HEK293 (cell line): ENCODE measurements at regions of chr22 and their contacts with region 1.

Region 1: GRCh38 chr22:33018232-33018864 is 39.8 kb downstream of the SYN3 start:
- H3K4me3 ChIP-seq: no peak overlapping the region
- H3K27ac ChIP-seq: no peak overlapping the region
- H3K4me1 ChIP-seq: peaks cover 6% of the 10 kb centered on the region; the same call in 1 of the 2 replicates
- CTCF ChIP-seq: peak; percentile 46; the same call in 1 of the 2 replicates

Region 2: DNA sequence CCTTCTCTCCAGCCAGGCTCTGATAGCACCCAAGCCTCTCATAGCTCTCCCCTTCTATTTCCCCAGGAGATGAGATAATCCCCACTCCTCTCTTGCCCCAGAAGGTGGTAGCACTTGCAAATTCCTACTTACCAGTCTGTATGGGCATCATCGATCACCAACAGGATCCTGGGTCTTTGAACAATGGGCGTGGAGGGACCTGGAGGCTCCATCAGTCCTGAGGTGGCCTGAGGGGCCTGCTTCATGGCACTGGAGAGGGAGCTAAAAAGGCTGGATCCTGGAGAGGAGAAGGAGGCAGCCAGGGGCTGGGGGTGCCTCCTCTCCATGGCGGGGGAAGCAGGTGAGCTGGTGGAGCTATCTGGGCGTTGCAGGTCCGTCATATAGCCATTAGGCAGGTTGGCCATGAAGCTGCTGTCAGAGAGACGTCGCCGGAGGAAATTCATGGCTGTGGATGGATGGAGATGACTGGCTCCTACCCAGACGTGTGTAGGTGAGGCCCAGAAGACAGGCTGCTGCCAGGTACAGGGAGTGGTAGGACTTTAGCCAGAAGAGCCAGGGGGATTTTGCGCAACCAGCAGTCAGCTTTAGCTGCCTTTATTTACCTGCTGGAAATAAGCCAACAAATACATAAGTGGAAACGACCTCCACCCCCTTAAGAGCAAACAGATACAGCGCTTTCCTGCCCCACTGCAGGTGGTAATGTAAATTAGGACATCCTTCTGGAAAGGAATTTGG is 12.0 kb before region 1 on chr22:
- CTCF ChIA-PET with region 1: interaction called, 48 read pairs
- POLR2A ChIA-PET with region 1: no interaction called
- H3K4me3 ChIP-seq: no peak overlapping the region
- H3K27ac ChIP-seq: no peak overlapping the region
- H3K4me1 ChIP-seq: 0 out of 2 replicates have a peak, but pooled peaks cover 4% of the 10 kb centered on the region
- CTCF ChIP-seq: no peak

Region 3: DNA sequence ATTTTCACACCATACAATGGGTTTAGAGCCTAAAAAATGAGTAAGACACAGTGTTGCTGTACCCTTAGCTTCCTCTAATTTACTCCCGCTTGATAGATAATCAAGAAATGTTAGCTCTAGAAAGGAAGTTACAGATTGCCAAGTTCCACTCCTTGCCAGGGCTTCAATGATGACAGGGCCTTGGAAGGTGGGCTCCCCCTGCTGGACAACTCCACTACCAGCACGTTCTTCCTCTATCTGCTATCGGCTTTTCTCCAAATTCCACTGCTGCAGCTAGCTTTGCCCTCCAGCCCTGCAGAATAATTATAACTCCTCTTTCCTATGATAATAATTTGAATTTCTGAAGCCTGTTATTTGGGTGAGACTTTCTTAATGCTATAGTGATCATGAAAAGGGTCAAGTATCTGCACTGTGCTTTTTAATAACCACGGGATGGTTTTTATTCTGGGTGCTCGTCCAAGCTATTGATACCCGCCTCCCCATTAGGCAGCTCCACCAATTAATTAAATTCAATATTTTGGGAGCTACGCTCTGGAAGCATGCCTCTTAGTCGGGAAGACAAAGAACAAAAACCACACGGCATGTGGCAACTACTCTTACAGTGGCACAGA is 30.9 kb after region 1 on chr22:
- CTCF ChIA-PET with region 1: interaction called, 271 read pairs
- POLR2A ChIA-PET with region 1: interaction called, 11 read pairs
- H3K4me3 ChIP-seq: no peak overlapping the region
- H3K27ac ChIP-seq: no peak overlapping the region
- H3K4me1 ChIP-seq: no peaks in the 10 kb centered on the region; the same call in 1 of the 2 replicates
- CTCF ChIP-seq: peak; percentile 50; the same call in 1 of the 2 replicates

Region 4: DNA sequence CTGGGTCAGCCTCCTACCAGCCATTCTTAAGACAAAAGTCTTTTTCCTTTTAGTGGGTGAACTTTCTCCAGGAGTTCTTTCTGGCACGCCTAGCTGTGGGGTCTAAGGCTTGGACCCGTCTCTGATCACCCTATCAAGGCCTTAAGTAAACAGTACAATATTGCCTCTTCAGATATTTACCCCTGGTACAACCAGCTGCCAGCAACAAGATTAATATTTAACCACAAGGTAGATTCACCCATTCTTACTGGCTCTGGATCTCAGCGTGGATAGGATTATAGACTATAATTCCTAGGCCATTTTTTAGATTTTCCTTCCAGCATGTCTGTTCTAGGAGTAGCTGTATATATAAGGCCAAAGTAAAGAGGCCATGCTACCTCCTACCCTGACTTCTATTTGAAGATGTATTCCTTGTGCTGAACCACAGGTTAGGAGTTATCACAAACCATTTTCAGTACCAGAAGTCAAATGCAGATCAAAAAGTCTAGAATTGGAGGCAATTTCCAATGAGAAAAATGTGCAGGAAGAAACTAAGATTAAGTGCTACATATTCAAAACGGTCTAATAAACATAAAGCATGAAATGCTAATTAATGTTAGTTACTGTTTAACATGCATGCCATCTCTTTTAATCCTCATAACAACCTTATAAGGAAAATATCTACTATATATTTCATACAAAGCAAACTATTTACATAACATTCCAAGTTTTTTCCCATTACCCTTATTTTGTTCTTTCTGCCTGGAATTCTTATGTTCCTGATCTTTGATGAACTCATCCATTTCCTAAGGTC is 149.8 kb after region 1 on chr22:
- CTCF ChIA-PET with region 1: no interaction called
- POLR2A ChIA-PET with region 1: no interaction called
- H3K4me3 ChIP-seq: no peak overlapping the region
- H3K27ac ChIP-seq: no peak overlapping the region
- H3K4me1 ChIP-seq: peaks cover 7% of the 10 kb centered on the region
- CTCF ChIP-seq: no peak

Region 5: DNA sequence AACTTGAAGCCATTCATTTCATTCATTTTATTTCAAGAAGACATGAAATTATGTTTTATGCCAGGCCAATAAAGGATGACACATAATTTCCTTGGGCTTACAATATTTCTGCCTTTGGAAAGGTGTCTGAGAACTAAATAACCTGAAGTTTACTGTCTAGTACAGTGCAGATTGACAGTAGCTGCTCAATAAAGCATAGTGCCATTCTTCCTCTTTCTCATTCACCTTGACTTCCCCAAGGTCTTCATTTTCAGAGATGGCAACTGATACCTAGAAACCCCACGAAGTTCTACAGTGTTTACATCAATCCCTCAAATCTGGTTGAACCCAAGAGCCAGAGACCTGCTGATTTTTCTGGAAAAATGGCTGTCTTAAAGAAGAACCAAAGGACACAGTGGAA is 184.1 kb after region 1 on chr22:
- CTCF ChIA-PET with region 1: interaction called, 33 read pairs
- POLR2A ChIA-PET with region 1: no interaction called
- H3K4me3 ChIP-seq: no peak overlapping the region
- H3K27ac ChIP-seq: no peak overlapping the region
- H3K4me1 ChIP-seq: no peaks in the 10 kb centered on the region
- CTCF ChIP-seq: no peak